Activated naive CD4-positive, alpha-beta T cell treated with anti-CD3 and anti-CD28 coated beads, Interleukin-2, amount 10 ng/mL, durations not matched to agents 7 days and 5 days (primary cell): ENCODE measurements at regions of chr14 and their contacts with region 1.

Region 1: GRCh38 chr14:101707068-101707842 is 54.3 kb upstream of the PPP2R5C start:
- DNase-seq: peak; percentile 67
- H3K4me3 Mint-ChIP-seq: no peak overlapping the region
- H3K27ac Mint-ChIP-seq: peak overlapping the region; percentile 84
- H3K4me1 Mint-ChIP-seq: peaks cover 40% of the 10 kb centered on the region
- H3K27me3 Mint-ChIP-seq: peaks cover 27% of the 10 kb centered on the region

Region 2: DNA sequence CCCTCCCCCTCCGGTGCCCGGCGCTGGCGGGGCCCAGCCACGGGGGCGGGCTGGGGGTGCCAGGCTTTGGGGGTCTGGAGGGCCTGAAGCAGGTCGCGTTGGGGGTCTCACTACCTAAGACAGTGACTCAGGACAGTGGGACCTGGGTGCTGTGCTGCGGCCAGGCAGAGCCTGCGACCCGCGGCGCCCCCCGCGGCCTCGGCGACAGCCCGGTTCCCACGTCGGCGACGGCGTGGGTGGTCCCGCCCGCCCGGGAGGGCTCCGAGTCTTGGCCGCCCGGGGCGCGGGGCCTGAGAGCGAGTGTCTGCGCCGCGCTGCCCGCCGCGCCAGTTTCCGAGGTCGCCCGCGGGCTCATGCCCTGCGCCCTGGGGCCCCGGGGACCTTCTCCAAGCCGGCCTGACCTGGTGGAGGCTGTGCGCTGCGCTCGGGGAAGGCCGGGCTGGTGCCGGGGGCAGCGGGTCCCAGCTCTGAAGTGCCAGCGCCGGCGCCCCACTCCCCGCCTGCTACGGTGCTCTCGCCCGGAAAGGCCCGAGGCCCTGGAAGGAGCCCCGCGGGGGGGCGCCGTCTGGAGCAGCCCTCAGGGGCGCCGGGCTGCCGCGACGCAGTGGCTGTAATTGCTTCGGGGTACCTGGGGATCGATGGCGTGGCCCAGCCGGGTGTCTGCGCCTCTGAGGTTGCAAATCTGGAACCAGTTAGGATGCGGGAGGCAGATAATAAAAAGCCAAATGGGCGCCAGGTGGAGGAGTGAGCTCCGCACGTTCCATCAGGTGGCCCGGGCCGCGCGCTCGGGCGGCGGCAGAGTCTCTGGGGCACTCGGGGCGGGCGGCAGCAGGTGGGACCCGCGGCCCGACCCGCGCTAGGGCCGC is 248.5 kb before region 1 on chr14:
- CTCF ChIA-PET with region 1: no interaction called
- DNase-seq: no peak
- H3K4me3 Mint-ChIP-seq: no peak overlapping the region
- H3K27ac Mint-ChIP-seq: no peak overlapping the region
- H3K4me1 Mint-ChIP-seq: no peaks in the 10 kb centered on the region
- H3K27me3 Mint-ChIP-seq: peaks cover 49% of the 10 kb centered on the region

Region 3: GRCh38 chr14:101721951-101722661 is 14.9 kb after region 1 on chr14:
- CTCF ChIA-PET with region 1: interaction called, 16 read pairs
- DNase-seq: peak; percentile 84
- H3K4me3 Mint-ChIP-seq: peak overlapping the region; percentile 70
- H3K27ac Mint-ChIP-seq: peak overlapping the region; percentile 100
- H3K4me1 Mint-ChIP-seq: peaks cover 50% of the 10 kb centered on the region
- H3K27me3 Mint-ChIP-seq: peaks cover 3% of the 10 kb centered on the region

Region 4: DNA sequence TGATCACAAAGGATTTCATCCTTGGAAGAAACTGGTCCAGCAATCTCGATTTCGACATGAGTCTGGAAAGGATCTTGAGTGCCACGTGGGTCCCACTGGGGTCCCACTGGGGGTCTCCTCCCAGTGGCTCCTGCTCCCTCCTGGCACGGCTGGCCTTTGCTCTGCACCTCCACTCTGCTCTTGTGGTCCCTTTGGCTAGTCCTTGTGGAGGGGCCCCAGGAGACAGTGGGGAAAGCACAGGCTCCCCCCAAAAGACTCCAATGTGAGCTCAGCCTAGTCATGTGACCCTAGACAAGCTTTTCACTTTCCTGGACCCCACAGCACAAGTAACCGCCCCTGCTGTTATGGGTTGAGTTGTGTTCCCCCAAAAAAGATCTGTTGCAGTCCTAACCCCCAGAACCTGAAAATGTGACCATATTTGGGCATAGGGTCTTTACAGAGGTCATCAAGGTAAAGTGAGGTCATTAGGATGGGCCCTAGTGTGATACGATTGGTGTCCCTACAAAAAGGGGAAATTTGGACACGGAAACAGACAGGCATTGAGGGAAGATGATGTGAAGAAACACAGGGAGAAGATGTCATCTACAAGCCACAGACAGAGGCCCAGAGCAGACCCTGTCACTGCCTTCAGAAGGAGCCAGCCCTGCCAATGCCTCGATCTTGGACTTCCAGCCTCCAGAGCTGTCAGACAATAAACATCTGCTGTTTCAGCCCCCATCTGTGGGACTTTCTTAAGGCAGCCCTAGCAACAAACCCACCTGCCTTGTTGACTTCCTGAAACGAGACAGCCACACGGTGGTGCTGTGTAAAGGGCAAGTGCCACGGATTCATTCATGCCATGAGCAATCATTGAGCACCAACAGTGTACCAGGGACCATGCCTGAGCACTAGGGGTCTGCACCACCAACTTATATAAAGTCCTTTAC is 30.4 kb after region 1 on chr14:
- CTCF ChIA-PET with region 1: interaction called, 14 read pairs
- DNase-seq: peak; percentile 48
- H3K4me3 Mint-ChIP-seq: no peak overlapping the region
- H3K27ac Mint-ChIP-seq: no peak overlapping the region
- H3K4me1 Mint-ChIP-seq: peaks cover 15% of the 10 kb centered on the region
- H3K27me3 Mint-ChIP-seq: peaks cover 12% of the 10 kb centered on the region

Region 5: DNA sequence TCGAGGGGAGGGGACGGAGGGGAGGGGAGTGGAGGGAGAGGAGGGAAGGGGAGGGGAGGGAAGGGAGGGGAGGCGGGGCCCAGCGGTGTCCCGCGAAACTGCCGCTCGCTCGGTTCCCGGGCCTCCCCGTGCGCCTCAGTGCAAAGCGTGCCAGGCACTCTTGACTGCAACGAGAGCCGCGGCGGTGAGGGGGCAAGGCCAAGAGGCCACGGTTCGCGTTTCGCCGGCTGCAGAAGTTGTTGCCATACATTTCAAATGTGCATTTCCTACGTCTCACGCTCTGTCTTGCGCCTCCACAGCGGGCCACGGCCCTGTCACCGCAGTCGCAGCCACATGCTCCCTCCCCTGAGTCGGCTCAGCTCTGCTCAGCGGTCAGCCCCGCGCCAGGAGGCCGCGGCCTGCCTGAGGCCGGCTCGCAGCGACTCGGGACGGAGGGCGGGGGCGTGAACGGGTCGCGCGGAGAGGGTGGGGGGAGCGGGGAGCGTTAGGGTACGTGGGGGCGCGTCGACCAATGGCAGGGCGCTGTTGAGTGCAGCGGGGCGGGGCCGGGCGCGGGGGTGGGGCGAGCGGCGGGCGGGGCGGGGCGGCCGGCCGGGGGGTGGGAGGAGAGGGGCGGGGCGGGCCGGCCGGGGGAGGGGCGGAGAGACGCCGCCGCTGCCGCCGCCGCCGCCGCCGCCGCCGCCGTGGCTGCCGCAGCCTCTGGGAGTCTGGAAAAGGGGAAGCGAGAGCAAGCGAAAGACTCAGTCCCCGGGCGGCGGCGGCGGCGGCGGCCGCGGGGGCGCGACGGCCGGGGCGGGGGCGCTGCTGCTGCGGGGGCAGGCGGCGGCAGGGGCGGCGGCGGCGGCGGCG is 54.0 kb after region 1 on chr14 and contains the start of gene PPP2R5C:
- CTCF ChIA-PET with region 1: interaction called, 16 read pairs
- DNase-seq: peak; percentile 92
- H3K4me3 Mint-ChIP-seq: peak within 1 kb of the TSS; percentile 86
- H3K27ac Mint-ChIP-seq: peak within 1 kb of the TSS; percentile 88
- H3K4me1 Mint-ChIP-seq: peaks cover 38% of the 10 kb centered on the region
- H3K27me3 Mint-ChIP-seq: peaks cover 25% of the 10 kb centered on the region

Region 6: GRCh38 chr14:101767618-101768362 is 60.5 kb after region 1 on chr14:
- CTCF ChIA-PET with region 1: interaction called, 70 read pairs
- DNase-seq: no peak
- H3K4me3 Mint-ChIP-seq: no peak overlapping the region
- H3K27ac Mint-ChIP-seq: peak overlapping the region; percentile 33
- H3K4me1 Mint-ChIP-seq: peaks cover 21% of the 10 kb centered on the region
- H3K27me3 Mint-ChIP-seq: no peaks in the 10 kb centered on the region

Region 7: DNA sequence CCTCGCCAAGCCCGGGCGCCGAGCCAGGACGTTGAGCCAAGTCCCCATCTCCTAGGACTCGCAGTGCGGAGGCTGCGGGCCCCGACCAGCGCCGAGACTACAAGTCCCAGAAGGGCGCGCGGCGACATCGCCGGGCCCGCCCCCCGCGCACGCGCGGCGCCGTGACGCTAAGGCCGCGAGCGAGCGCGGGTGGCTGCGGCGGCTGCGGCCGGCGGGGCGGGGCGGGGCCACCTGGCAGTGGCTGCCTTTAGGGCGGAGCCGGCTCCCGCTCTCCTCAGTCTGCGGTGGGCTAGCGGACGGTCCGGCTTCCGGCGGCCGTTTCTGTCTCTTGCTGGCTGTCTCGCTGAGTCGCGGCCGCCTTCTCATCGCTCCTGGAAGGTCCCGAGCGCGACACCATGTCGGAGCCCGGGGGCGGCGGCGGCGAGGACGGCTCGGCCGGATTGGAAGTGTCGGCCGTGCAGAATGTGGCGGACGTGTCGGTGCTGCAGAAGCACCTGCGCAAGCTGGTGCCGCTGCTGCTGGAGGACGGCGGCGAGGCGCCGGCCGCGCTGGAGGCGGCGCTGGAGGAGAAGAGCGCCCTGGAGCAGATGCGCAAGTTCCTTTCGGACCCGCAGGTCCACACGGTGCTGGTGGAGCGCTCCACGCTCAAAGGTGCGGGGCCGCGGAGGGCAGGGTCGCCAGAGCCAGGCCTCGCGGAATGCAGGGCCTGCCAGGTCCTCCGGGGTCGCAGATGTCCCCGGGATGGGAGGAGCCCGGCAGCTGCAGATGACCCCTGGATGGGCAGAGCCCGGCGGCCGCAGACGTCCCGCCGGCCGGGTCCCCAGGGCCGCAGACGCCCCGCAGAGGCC is 257.3 kb after region 1 on chr14 and contains the start of gene DYNC1H1:
- CTCF ChIA-PET with region 1: interaction called, 18 read pairs
- DNase-seq: peak; percentile 90
- H3K4me3 Mint-ChIP-seq: peak within 1 kb of the TSS; percentile 91
- H3K27ac Mint-ChIP-seq: peak within 1 kb of the TSS; percentile 93
- H3K4me1 Mint-ChIP-seq: peaks cover 46% of the 10 kb centered on the region
- H3K27me3 Mint-ChIP-seq: peaks cover 10% of the 10 kb centered on the region

Region 8: GRCh38 chr14:102096214-102097114 is 389.2 kb after region 1 on chr14:
- CTCF ChIA-PET with region 1: interaction called, 15 read pairs
- DNase-seq: peak; percentile 82
- H3K4me3 Mint-ChIP-seq: no peak overlapping the region
- H3K27ac Mint-ChIP-seq: no peak overlapping the region
- H3K4me1 Mint-ChIP-seq: peaks cover 5% of the 10 kb centered on the region
- H3K27me3 Mint-ChIP-seq: no peaks in the 10 kb centered on the region